ENCODE measurements at regions of chr18 and their contacts with region 1.

Region 1: GRCh38 chr18:30387401-30387800 is 655.1 kb downstream of the DSC3 start:
- DNase-seq: peak in 2 of 4 experiments; percentile 30 to 80
- ATAC-seq: peak; percentile 25
- H3K4me3 ChIP-seq: no peak overlapping the region
- H3K27ac ChIP-seq: no peak overlapping the region
- H3K4me1 ChIP-seq: no peaks in the 10 kb centered on the region
- H3K27me3 ChIP-seq: no peaks in the 10 kb centered on the region
- CTCF ChIP-seq: no peak
- EP300 ChIP-seq: no peak
- POLR2A ChIP-seq: no peak
- RAD21 ChIP-seq: no peak

Region 2: DNA sequence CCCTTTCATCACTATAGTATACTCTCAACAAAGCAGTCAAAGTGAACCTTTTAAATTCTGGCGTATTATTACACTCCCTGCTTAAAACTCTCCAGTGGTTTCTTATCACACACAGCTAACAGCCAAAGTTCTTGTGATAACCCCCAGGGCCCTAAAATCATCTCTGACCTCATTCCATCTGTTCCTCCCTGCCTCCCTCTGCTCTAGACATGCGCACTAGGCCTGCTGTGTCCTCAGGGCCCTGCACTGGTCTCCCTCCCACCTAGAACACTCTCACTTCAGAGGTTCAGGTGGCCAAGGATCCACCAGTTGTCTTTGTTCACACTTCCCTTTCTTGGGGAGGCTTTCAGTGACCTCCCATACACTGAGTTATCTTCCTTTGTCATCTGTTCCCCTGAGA is 51.8 kb after region 1 on chr18:
- CTCF ChIA-PET with region 1: no interaction called
- POLR2A ChIA-PET with region 1: no interaction called
- in situ Hi-C with region 1: no loop called
- intact Hi-C with region 1: loop called (anchors 5 kb)
- DNase-seq: peak; percentile 10 to 76 (median 28)
- ATAC-seq: peak; percentile 84
- H3K4me3 ChIP-seq: no peak overlapping the region
- H3K27ac ChIP-seq: no peak overlapping the region; the same call in 2 of the 3 replicates
- H3K4me1 ChIP-seq: no peaks in the 10 kb centered on the region; a peak in 1 of 5 replicates
- H3K27me3 ChIP-seq: no peaks in the 10 kb centered on the region
- CTCF ChIP-seq: no peak
- EP300 ChIP-seq: no peak
- POLR2A ChIP-seq: no peak
- RAD21 ChIP-seq: no peak